A673 (cell line): ENCODE measurements at regions of chrX and their contacts with region 1.

Region 1: DNA sequence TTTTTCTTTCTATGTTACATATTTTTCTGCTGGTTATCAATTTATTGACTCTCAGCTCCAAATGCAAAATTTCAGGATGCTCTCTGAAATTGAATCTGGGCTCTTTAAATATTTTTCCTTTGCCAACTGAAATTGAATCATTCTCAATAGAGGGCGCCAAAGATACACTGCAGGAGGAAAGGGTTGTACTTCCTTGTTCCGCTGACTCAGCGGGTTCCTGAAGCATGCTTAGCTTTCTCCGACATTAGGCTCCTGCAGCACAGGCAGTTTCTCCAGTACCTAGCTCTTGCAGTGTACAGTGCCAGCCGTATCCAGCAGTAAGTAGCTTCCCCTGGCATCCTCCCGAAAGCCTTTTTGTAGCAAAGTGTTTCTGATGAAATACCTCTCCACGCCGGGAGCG is 28.8 kb upstream of the CFAP47 start:
- DNase-seq: peak; percentile 94
- H3K4me3 ChIP-seq: peak overlapping the region; percentile 21
- H3K27ac ChIP-seq: peak overlapping the region; percentile 62
- H3K4me1 ChIP-seq: peaks cover 10% of the 10 kb centered on the region
- H3K27me3 ChIP-seq: no peaks in the 10 kb centered on the region
- CTCF ChIP-seq: peak; percentile 79

Region 2: DNA sequence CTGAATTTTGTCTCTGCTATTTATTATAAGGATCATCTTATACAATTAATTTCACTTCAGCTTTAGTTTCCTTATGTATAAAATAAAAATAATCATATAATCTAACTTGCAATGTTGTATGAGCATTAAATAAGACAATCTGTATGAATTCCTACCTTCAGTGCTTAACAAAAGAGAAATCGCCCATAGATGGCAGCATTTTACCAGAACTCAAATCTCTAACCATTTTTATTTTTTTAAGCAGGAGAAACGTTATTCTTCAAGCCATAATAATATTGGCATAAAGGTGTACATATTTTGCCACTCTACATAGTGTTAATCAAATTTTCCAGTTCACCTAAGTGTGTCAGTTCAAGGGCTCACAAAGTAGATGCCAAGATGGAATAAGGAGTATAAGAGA is 1312.5 kb before region 1 on chrX:
- CTCF ChIA-PET with region 1: no interaction called
- POLR2A ChIA-PET with region 1: no interaction called
- intact Hi-C with region 1: loop called (anchors 10 kb)
- DNase-seq: peak; percentile 76
- H3K4me3 ChIP-seq: no peak overlapping the region
- H3K27ac ChIP-seq: no peak overlapping the region
- H3K4me1 ChIP-seq: peaks cover 16% of the 10 kb centered on the region
- H3K27me3 ChIP-seq: no peaks in the 10 kb centered on the region
- CTCF ChIP-seq: peak; percentile 71

Region 3: GRCh38 chrX:36116222-36116621 is 225.5 kb after region 1 on chrX:
- CTCF ChIA-PET with region 1: no interaction called
- POLR2A ChIA-PET with region 1: no interaction called
- intact Hi-C with region 1: no loop called
- DNase-seq: no peak
- H3K4me3 ChIP-seq: no peak overlapping the region
- H3K27ac ChIP-seq: no peak overlapping the region
- H3K4me1 ChIP-seq: no peaks in the 10 kb centered on the region
- H3K27me3 ChIP-seq: no peaks in the 10 kb centered on the region
- CTCF ChIP-seq: no peak

Region 4: DNA sequence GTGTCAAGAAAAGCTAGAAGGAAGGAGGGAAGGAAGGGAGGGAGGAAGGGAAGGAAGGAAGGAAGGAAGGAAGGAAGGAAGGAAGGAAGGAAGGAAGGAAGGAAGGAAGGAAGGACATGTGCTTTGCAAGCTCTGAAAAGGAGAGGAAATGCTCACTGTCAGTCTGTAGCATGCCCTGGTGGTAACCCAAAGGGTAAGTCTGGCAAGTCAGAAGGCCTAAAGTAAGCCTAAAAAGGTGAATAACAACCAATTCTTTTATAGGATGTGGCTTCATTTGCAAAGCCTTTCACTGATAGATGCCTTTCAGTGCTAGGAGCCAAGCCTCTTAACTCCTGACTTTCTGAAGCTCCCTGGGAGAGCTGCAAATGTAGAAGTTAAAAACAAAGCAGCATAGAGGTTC is 571.4 kb after region 1 on chrX:
- CTCF ChIA-PET with region 1: no interaction called
- POLR2A ChIA-PET with region 1: no interaction called
- intact Hi-C with region 1: loop called (anchors 5 kb)
- DNase-seq: peak; percentile 73
- H3K4me3 ChIP-seq: no peak overlapping the region
- H3K27ac ChIP-seq: peak overlapping the region; percentile 87
- H3K4me1 ChIP-seq: no peaks in the 10 kb centered on the region
- H3K27me3 ChIP-seq: no peaks in the 10 kb centered on the region
- CTCF ChIP-seq: no peak

Region 5: DNA sequence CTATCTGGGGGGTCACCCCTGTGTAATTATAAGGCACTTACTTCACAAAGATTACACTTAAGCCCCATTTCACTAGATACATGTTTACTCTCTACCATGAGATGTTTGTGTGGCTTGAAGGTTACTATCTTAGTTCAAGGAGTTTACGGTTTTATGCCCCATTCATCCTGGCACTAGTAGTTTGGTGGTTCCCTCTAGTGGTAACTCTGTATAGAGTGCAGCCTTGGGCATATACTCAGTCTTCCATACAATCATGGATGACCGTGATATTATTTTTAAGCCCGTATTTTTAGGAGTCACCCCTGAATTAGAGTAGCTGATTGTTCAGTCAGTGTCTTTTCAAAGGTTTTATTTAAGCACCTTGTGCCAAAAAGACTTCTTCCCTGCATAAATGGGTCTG is 1007.6 kb after region 1 on chrX:
- CTCF ChIA-PET with region 1: no interaction called
- POLR2A ChIA-PET with region 1: no interaction called
- intact Hi-C with region 1: loop called (anchors 5 kb)
- DNase-seq: peak; percentile 65
- H3K4me3 ChIP-seq: no peak overlapping the region
- H3K27ac ChIP-seq: no peak overlapping the region
- H3K4me1 ChIP-seq: no peaks in the 10 kb centered on the region
- H3K27me3 ChIP-seq: no peaks in the 10 kb centered on the region
- CTCF ChIP-seq: peak; percentile 87